Naive thymus-derived CD4-positive, alpha-beta T cell (primary cell): ENCODE measurements at regions of chr4 and their contacts with region 1.

Region 1: GRCh38 chr4:109803924-109804571 is 2.2 kb upstream of the CFI start:
- DNase-seq: peak in 4 of 9 donors; percentile 8 to 25 (median 16)
- ATAC-seq: peak; percentile 44
- H3K4me3 ChIP-seq: no peak overlapping the region
- H3K4me3 Mint-ChIP-seq: no peak overlapping the region
- H3K27ac ChIP-seq: no peak overlapping the region
- H3K27ac Mint-ChIP-seq: no peak overlapping the region
- H3K4me1 ChIP-seq: no peaks in the 10 kb centered on the region
- H3K4me1 Mint-ChIP-seq: no peaks in the 10 kb centered on the region
- H3K27me3 ChIP-seq: no peaks in the 10 kb centered on the region
- H3K27me3 Mint-ChIP-seq: peaks cover 0 to 10% (median 7%) of the 10 kb centered on the region in 5 donors

Region 2: DNA sequence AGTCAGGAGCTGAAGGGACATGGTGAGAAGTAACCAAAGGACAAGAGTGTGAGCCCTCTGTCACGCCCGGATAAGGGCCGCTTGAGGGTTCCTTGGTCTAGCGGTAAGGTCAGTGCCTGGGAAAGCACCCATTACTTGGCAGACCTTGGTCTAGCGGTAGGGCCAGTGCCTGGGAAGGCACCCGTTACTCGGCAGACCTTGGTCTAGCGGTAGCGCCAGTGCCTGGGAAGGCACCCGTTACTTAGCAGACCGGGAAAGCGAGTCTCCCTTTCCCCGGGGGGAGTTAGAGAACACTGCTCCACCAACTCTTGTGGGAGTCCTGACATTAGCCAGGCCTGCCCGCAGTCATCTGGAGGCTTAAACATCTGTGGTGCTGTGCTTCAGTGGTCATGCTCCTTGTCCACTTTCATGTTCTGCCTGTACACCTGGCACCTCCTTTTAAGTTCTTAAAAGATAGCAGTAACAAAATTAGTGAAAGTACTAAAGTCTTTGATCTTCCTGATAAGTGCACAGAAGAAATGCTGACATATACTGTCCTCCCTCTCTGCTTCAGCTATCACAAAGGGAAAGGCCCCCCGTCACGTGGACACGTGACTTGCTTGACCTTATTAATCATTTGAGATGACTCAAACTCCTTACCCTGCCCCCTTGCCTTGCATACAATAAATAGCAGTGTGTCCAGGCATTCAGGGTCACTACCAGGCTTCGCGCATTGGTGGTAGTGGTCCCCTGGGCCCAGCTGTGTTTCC is 379.8 kb before region 1 on chr4:
- CTCF ChIA-PET with region 1: no interaction called
- POLR2A ChIA-PET with region 1: no interaction called
- intact Hi-C with region 1: loop called (anchors 1 kb)
- DNase-seq: no peak
- ATAC-seq: no peak
- H3K4me3 ChIP-seq: no peak overlapping the region
- H3K4me3 Mint-ChIP-seq: no peak overlapping the region
- H3K27ac ChIP-seq: no peak overlapping the region
- H3K27ac Mint-ChIP-seq: no peak overlapping the region
- H3K4me1 ChIP-seq: no peaks in the 10 kb centered on the region
- H3K4me1 Mint-ChIP-seq: peaks cover 4 to 7% (median 5%) of the 10 kb centered on the region in 7 donors
- H3K27me3 ChIP-seq: no peaks in the 10 kb centered on the region
- H3K27me3 Mint-ChIP-seq: peaks cover 0 to 10% (median 0%) of the 10 kb centered on the region in 5 donors

Region 3: DNA sequence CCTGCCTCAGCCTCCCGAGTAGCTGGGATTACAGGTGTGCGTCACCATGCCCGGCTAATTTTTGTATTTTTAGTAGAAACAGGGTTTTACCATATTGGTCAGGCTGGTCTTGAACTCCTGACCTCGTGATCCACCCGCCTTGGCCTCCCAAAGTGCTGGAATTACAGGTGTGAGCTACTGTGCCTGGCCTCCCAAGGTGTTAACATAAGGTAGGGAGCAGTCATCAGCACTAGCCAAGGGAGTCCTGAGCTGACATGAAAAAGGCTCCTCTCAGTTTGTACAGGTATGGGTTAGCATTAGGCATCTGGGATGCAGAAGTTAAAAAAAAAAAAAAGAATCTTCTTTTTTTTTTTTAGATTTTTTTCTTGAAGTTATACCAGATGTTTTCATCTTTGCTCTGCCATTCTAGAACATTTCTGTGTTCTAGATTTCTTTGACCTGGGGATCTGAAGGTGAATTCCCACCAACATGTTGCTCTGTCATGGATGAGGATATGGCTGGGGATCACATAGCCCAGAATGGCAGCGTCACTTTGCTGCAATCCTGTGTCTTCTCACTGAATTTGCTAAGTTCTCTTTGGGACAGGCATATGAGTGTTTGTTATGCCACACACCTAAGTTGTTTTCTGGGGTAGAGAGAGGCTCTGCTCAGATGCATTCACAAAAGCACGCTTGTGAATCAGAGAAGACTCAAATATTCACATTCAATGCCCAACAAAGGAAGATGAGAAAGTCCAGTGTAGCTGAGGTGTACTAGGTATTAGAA is 49.8 kb before region 1 on chr4:
- CTCF ChIA-PET with region 1: no interaction called
- POLR2A ChIA-PET with region 1: no interaction called
- intact Hi-C with region 1: loop called in 1 of 2 experiments (anchors 5 kb)
- DNase-seq: peak in 6 of 9 donors; percentile 10 to 53 (median 36)
- ATAC-seq: peak; percentile 10
- H3K4me3 ChIP-seq: no peak overlapping the region
- H3K4me3 Mint-ChIP-seq: no peak overlapping the region
- H3K27ac ChIP-seq: no peak overlapping the region
- H3K27ac Mint-ChIP-seq: peak overlapping the region in 3 of 9 donors; percentile 21 to 48 (median 29)
- H3K4me1 ChIP-seq: no peaks in the 10 kb centered on the region
- H3K4me1 Mint-ChIP-seq: no peaks in the 10 kb centered on the region
- H3K27me3 ChIP-seq: no peaks in the 10 kb centered on the region
- H3K27me3 Mint-ChIP-seq: peaks cover 0 to 13% (median 6%) of the 10 kb centered on the region in 5 donors

Region 4: GRCh38 chr4:109890076-109890475 is 86.0 kb after region 1 on chr4:
- CTCF ChIA-PET with region 1: no interaction called
- POLR2A ChIA-PET with region 1: no interaction called
- intact Hi-C with region 1: no loop called
- DNase-seq: no peak
- ATAC-seq: no peak
- H3K4me3 ChIP-seq: no peak overlapping the region
- H3K4me3 Mint-ChIP-seq: no peak overlapping the region
- H3K27ac ChIP-seq: no peak overlapping the region
- H3K27ac Mint-ChIP-seq: no peak overlapping the region
- H3K4me1 ChIP-seq: no peaks in the 10 kb centered on the region
- H3K4me1 Mint-ChIP-seq: no peaks in the 10 kb centered on the region
- H3K27me3 ChIP-seq: no peaks in the 10 kb centered on the region
- H3K27me3 Mint-ChIP-seq: peaks cover 0 to 5% (median 0%) of the 10 kb centered on the region in 5 donors

Region 5: GRCh38 chr4:110211007-110211769 is 407.1 kb after region 1 on chr4:
- CTCF ChIA-PET with region 1: no interaction called
- POLR2A ChIA-PET with region 1: no interaction called
- intact Hi-C with region 1: no loop called
- DNase-seq: peak in 7 of 9 donors; percentile 15 to 59 (median 45)
- ATAC-seq: peak; percentile 78
- H3K4me3 ChIP-seq: no peak overlapping the region
- H3K4me3 Mint-ChIP-seq: peak overlapping the region in 2 of 10 donors; percentile 25 to 29
- H3K27ac ChIP-seq: no peak overlapping the region
- H3K27ac Mint-ChIP-seq: peak overlapping the region in 1 of 9 donors; percentile 25
- H3K4me1 ChIP-seq: no peaks in the 10 kb centered on the region
- H3K4me1 Mint-ChIP-seq: peaks cover 0 to 5% (median 0%) of the 10 kb centered on the region in 7 donors
- H3K27me3 ChIP-seq: no peaks in the 10 kb centered on the region
- H3K27me3 Mint-ChIP-seq: peaks cover 0 to 7% (median 0%) of the 10 kb centered on the region in 5 donors